ENCODE measurements at regions of chr19 and their contacts with region 1.

Region 1: GRCh38 chr19:11528551-11529341 is at the start of gene ECSIT:
- H3K4me3 ChIP-seq: peak within 1 kb of the TSS; percentile 93
- H3K27ac ChIP-seq: peak within 1 kb of the TSS; percentile 61
- H3K4me1 ChIP-seq: no peaks in the 10 kb centered on the region
- CTCF ChIP-seq: no peak

Region 2: GRCh38 chr19:11324079-11324661 is 204.6 kb before region 1 on chr19:
- CTCF ChIA-PET with region 1: no interaction called
- POLR2A ChIA-PET with region 1: no interaction called
- H3K4me3 ChIP-seq: no peak overlapping the region
- H3K27ac ChIP-seq: peak overlapping the region; percentile 63; the same call in 1 of the 2 replicates
- H3K4me1 ChIP-seq: peaks cover 20% of the 10 kb centered on the region
- CTCF ChIP-seq: no peak

Region 3: DNA sequence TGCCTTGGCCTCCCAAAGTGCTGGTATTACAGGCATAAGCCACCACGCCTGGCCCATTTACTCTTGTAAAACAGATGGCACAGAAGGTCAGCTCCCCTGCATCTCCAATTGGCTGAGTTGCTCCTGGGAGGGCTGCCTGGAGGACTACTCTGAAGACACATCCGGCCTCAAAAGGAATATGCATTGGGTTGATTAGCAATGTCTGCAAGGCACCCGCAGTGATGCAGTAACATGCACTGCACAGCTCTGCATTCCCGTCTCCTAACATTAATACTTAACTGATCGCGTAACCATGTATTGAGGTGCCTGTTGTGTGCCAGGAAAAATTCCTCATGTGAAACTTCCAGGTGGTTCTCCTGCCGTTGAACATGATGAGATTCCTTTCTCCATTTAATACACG is 52.9 kb before region 1 on chr19:
- CTCF ChIA-PET with region 1: no interaction called
- POLR2A ChIA-PET with region 1: no interaction called
- H3K4me3 ChIP-seq: no peak overlapping the region
- H3K27ac ChIP-seq: no peak overlapping the region
- H3K4me1 ChIP-seq: no peaks in the 10 kb centered on the region
- CTCF ChIP-seq: no peak

Region 4: DNA sequence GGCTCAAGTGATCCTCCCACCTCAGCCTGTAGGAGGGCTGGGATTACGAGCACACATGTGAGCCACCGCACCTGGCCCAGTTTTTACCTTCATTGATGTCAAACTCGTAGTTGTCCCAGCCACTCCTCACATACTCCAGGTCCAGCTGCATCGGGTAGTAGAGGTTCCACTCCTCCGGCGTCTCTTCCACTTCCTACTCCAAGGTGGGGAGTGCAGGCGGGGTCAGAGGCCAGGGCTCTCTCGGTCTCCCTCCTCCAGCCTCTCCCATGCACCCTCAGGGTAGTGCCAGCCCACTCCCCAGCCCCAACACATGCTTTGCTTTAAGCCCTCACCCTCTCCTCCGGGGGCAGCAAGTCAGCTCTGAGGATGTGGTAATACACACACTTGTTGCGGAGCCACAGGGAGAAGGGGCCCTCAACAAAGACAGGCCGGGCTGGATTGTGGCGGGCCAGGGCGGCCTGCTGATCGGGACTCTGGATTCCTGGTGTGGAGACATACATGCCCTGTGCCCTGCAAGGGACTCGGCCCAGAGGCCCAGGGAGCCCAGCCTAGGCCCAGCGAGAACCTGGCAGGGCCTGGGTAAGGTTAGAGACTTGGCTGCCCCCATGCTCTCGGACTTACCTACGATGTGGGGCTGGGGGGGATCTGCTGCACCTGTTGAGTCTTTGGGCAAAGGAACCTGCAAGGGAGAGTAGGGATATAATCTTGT is 21.2 kb before region 1 on chr19:
- CTCF ChIA-PET with region 1: no interaction called
- POLR2A ChIA-PET with region 1: interaction called, 10 read pairs
- H3K4me3 ChIP-seq: no peak overlapping the region
- H3K27ac ChIP-seq: no peak overlapping the region
- H3K4me1 ChIP-seq: peaks cover 6% of the 10 kb centered on the region
- CTCF ChIP-seq: no peak

Region 5: GRCh38 chr19:11558881-11559828 is 30.4 kb after region 1 on chr19 and contains the start of gene ELOF1:
- CTCF ChIA-PET with region 1: no interaction called
- POLR2A ChIA-PET with region 1: interaction called, 11 read pairs
- H3K4me3 ChIP-seq: peak within 1 kb of the TSS; percentile 79
- H3K27ac ChIP-seq: peak within 1 kb of the TSS; percentile 10; the same call in 1 of the 2 replicates
- H3K4me1 ChIP-seq: no peaks in the 10 kb centered on the region
- CTCF ChIP-seq: peak; percentile 45